Gastrocnemius medialis (tissue), 4 donors: ENCODE measurements at regions of chr3 and their contacts with region 1.

Region 1: DNA sequence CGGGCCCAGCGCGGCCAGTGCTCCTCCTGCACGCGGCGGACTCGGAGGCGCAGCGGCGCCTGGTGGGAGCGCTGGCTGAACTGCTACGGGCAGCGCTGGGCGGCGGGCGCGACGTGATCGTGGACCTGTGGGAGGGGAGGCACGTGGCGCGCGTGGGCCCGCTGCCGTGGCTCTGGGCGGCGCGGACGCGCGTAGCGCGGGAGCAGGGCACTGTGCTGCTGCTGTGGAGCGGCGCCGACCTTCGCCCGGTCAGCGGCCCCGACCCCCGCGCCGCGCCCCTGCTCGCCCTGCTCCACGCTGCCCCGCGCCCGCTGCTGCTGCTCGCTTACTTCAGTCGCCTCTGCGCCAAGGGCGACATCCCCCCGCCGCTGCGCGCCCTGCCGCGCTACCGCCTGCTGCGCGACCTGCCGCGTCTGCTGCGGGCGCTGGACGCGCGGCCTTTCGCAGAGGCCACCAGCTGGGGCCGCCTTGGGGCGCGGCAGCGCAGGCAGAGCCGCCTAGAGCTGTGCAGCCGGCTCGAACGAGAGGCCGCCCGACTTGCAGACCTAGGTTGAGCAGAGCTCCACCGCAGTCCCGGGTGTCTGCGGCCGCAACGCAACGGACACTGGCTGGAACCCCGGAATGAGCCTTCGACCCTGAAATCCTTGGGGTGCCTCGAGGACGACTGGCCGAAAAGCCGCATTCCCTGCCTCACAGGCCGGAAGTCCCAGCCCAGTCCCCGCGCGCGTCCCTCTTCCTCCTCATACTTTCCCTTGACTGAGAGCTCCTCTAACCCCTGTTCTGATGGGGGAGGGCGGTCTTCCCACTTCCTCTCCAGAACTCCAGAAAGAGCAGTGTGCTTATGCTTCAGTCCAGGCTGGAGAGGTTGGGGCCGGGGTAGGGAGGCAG is 1.4 kb upstream of the IL17RC start:
- DNase-seq: peak; percentile 39 to 57
- ATAC-seq: peak; percentile 39 to 42
- H3K4me3 ChIP-seq: peak overlapping the region; percentile 59 to 85 (median 72)
- H3K27ac ChIP-seq: peak overlapping the region; percentile 85 to 95 (median 92)
- H3K4me1 ChIP-seq: peaks cover 17 to 30% of the 10 kb centered on the region in 2 donors
- H3K27me3 ChIP-seq: no peaks in the 10 kb centered on the region
- CTCF ChIP-seq: peak in 4 of 5 experiments; percentile 31 to 57 (median 44)
- POLR2A ChIP-seq: peak in 1 of 2 donors; percentile 35

Region 2: GRCh38 chr3:9800525-9800924 is 115.0 kb before region 1 on chr3:
- in situ Hi-C with region 1: no loop called
- intact Hi-C with region 1: loop called (anchors 5 kb)
- DNase-seq: no peak
- ATAC-seq: no peak
- H3K4me3 ChIP-seq: no peak overlapping the region
- H3K27ac ChIP-seq: peak overlapping the region in 1 of 4 donors; percentile 33
- H3K4me1 ChIP-seq: peaks cover 10 to 12% of the 10 kb centered on the region in 2 donors
- H3K27me3 ChIP-seq: no peaks in the 10 kb centered on the region
- CTCF ChIP-seq: peak in 1 of 5 experiments; percentile 9
- POLR2A ChIP-seq: no peak

Region 3: DNA sequence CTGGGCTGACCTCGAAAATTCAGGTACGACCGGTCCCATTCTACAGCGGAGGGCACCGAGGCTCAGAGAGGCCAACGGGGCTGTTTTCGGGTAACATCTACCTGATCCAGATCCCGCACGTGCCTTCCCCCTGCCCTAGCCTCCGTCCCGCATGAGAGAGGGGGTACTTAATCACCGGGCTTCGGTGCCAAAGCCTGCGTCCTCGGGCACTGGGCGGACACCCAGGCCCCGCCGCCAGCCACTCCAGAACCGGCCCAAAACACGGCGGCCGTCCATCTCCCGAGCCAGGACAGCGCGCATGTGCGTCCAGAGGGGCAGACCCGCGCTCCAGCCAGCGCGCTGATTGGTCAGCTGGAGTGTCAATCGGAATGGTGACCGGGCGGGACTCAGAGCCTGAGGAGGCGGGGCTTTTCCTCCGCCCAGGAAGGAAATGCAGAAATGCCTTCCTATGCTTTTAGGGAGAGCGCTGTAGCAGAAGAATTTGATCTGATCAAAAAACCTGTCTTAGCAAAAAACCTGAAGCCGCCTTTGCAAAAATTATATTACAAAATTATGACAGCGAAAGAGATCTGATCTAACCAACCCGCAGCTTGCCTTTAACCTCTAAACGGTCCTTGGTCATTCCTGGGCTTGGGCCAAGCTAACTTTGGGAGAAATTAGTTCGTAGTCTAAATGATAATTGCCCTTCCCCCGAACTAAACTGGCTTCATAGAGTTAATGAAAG is 71.6 kb before region 1 on chr3 and contains the start of gene RPUSD3:
- in situ Hi-C with region 1: no loop called
- intact Hi-C with region 1: loop called (anchors 2 kb)
- DNase-seq: peak; percentile 97
- ATAC-seq: peak; percentile 98 to 99
- H3K4me3 ChIP-seq: peak within 1 kb of the TSS; percentile 66 to 96 (median 80)
- H3K27ac ChIP-seq: peak within 1 kb of the TSS; percentile 78 to 90 (median 85)
- H3K4me1 ChIP-seq: peaks cover 7 to 12% of the 10 kb centered on the region in 2 donors
- H3K27me3 ChIP-seq: no peaks in the 10 kb centered on the region
- CTCF ChIP-seq: no peak
- POLR2A ChIP-seq: peak; percentile 42 to 63
- total RNA-seq, gene RPUSD3: 72.7 to 96.7 (median 75.5) TPM

Region 4: GRCh38 chr3:9862391-9863057 is 53.0 kb before region 1 on chr3:
- in situ Hi-C with region 1: no loop called
- intact Hi-C with region 1: loop called (anchors 2 kb)
- DNase-seq: peak; percentile 22 to 46
- ATAC-seq: peak; percentile 52 to 53
- H3K4me3 ChIP-seq: peak overlapping the region; percentile 51 to 77 (median 58)
- H3K27ac ChIP-seq: peak overlapping the region in 2 of 4 donors; percentile 13 to 31
- H3K4me1 ChIP-seq: peaks cover 0 to 7% of the 10 kb centered on the region in 2 donors
- H3K27me3 ChIP-seq: no peaks in the 10 kb centered on the region
- CTCF ChIP-seq: peak in 3 of 5 experiments; percentile 50 to 62 (median 55)
- POLR2A ChIP-seq: no peak

Region 5: DNA sequence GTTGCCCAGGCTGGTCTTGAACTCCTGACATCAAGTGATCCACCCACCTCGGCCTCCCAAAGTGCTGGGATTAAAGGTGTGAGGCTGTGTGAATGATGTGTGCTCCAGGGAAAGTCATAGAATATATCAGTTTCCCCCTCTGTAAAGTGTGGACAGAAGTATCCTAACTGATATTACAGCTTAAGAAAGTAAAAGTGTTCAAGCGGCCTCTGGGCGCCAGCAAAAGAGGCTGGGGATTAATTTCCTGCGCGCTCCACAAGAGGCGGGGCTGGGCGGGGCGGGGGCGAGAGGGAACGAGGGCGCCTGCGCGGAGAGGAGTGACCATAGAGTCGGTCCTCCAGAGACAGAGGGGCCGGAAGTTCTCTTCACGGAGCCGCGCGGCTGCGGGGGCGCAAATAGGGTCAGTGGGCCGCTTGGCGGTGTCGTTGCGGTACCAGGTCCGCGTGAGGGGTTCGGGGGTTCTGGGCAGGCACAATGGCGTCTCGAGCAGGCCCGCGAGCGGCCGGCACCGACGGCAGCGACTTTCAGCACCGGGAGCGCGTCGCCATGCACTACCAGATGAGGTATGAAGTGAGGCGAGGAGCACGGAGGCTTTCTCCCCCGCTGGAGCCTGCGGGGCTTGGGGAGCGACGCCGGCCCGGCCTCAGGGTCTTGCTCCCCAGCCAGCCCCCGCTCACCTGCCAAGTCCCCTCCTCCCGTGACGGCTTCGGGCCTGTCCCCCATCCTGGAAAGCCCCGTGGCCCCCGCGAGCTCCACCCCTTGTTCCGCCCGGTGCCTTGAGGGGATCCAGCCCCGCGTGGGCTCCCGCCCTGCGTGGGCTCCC is 25.0 kb before region 1 on chr3 and contains the start of gene JAGN1:
- in situ Hi-C with region 1: no loop called
- intact Hi-C with region 1: loop called (anchors 2 kb)
- DNase-seq: peak; percentile 83 to 86
- ATAC-seq: peak; percentile 97 to 98
- H3K4me3 ChIP-seq: peak within 1 kb of the TSS; percentile 65 to 100 (median 88)
- H3K27ac ChIP-seq: peak within 1 kb of the TSS; percentile 93 to 100 (median 96)
- H3K4me1 ChIP-seq: peaks cover 7 to 11% of the 10 kb centered on the region in 2 donors
- H3K27me3 ChIP-seq: no peaks in the 10 kb centered on the region
- CTCF ChIP-seq: no peak
- POLR2A ChIP-seq: peak; percentile 91 to 93
- total RNA-seq, gene JAGN1: 42.8 to 96.4 (median 67.0) TPM

Region 6: DNA sequence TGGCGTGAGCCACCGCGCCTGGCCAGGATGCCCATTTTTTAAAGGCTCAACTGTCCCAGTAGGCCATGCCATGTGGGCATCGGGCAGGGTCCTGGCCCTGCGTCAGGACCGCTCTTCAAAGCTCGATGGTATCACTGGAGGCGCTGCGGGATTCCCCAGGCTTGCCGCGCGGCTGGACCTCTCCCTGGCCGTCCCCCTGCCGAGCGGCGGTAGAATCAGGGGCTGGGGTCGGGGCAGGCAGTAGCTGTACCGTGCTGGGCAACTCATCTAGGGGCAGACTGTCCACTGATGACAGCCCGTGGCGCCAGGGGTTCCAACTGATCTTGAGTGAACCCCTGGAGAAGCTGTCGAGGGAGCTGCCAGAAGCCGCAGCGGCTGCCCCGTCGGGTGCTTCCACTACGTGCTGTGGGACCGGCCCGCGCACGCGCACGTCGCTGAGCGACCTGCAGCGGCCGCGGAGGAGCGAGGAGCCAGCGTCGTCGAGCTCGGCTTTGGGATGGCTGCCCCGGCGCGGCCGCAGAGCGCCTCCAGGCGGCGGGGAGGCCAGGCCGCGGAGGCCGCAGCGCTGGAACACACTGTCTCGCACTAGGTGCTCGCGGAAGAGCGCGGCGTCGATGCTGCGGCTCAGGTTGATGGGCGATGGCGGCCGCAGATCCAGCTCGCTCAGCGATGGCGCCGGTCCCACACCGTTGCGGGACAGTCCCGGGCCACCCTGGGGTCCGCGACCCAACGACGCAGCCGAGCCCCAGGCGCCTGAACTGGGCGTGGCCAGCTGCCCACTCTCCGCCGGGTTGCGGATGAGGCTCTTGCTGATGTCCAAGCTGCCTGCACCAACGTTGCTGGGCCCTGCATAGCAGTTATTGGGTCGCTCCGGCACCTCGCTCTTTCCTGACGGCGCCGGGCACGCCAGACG is 30.9 kb after region 1 on chr3:
- in situ Hi-C with region 1: no loop called
- intact Hi-C with region 1: loop called (anchors 1 kb)
- DNase-seq: peak; percentile 67 to 81
- ATAC-seq: peak; percentile 73 to 76
- H3K4me3 ChIP-seq: peak overlapping the region; percentile 62 to 87 (median 80)
- H3K27ac ChIP-seq: peak overlapping the region; percentile 79 to 92 (median 84)
- H3K4me1 ChIP-seq: peaks cover 7 to 16% of the 10 kb centered on the region in 2 donors
- H3K27me3 ChIP-seq: no peaks in the 10 kb centered on the region
- CTCF ChIP-seq: peak; percentile 59 to 78 (median 66)
- POLR2A ChIP-seq: peak; percentile 21 to 41